Panc1 (cell line): ENCODE measurements at regions of chr12 and their contacts with region 1.

Region 1: DNA sequence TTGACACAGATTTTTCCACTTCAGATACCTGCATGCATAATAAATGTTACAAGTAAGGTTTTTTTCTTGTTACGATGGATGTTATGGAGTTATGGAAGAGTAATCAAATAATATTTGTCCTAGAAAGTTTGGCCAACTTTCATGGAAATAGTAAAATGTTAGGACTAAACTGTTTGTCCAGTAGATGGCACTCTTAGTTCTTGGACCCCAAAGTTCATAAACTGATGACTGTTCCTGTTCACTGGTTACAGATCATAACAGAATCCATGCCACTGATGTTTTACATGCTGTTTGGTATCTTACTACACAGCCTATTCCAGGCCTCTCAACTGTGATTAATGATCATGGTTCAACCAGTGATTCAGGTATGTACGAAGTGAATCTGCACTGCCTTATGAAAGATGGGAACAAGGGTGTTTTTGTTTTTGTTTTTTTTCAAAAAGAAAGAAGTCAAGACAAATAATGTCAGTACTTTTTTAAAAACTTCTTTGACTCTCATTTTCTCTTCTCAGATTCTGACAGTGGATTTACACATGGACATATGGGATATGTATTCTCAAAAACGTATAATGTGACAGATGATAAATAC is 48.8 kb upstream of the SLCO1C1 start:
- DNase-seq: no peak
- ATAC-seq: no peak
- H3K4me3 ChIP-seq: no peak overlapping the region
- H3K27ac ChIP-seq: no peak overlapping the region
- H3K4me1 ChIP-seq: no peaks in the 10 kb centered on the region
- H3K27me3 ChIP-seq: no peaks in the 10 kb centered on the region
- CTCF ChIP-seq: peak; percentile 48; the same call in 1 of the 2 replicates

Region 2: GRCh38 chr12:20798561-20798960 is 152.2 kb after region 1 on chr12:
- CTCF ChIA-PET with region 1: no interaction called
- POLR2A ChIA-PET with region 1: no interaction called
- in situ Hi-C with region 1: no loop called
- intact Hi-C with region 1: loop called (anchors 1 kb)
- DNase-seq: no peak
- ATAC-seq: no peak
- H3K4me3 ChIP-seq: no peak overlapping the region
- H3K27ac ChIP-seq: no peak overlapping the region
- H3K4me1 ChIP-seq: no peaks in the 10 kb centered on the region
- H3K27me3 ChIP-seq: no peaks in the 10 kb centered on the region
- CTCF ChIP-seq: peak; percentile 8; the same call in 1 of the 2 replicates

Region 3: DNA sequence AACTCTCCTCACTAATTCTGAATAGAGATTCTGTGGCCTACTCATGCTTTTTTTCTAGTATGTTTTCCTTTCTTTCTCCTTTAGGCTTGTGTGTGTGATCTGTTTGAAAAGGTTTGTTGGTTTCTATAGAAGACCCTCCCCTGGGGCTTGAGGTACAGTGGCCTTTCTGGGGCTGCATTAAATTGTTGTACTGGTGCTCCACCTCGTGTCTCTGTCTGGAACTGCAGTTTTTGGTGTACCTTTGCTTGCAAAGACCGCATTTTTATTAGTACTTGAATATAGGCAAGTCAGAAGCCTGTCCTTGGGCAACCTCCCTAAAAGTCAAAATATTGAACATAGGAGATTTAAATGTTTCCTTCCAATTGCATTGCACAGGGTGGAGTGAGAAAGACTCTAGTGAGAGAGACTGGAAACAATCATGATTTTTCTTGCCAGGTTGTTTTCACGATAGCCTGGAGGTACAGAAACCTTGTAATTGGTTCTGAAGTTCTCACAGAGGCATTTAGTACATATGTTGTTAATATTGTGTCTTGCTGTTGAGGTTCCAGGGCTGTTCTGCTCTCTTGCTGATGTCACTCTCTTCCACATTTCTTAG is 523.6 kb after region 1 on chr12:
- CTCF ChIA-PET with region 1: no interaction called
- POLR2A ChIA-PET with region 1: no interaction called
- in situ Hi-C with region 1: no loop called
- intact Hi-C with region 1: loop called (anchors 5 kb)
- DNase-seq: peak; percentile 15
- ATAC-seq: no peak
- H3K4me3 ChIP-seq: no peak overlapping the region
- H3K27ac ChIP-seq: no peak overlapping the region
- H3K4me1 ChIP-seq: no peaks in the 10 kb centered on the region
- H3K27me3 ChIP-seq: no peaks in the 10 kb centered on the region
- CTCF ChIP-seq: peak; percentile 68